Esophagus muscularis mucosa (tissue), 4 donors: ENCODE measurements at regions of chr2 and their contacts with region 1.

Region 1: GRCh38 chr2:135741395-135742324 is at the start of gene UBXN4:
- DNase-seq: peak; percentile 99
- H3K4me3 ChIP-seq: peak within 1 kb of the TSS; percentile 94 to 99 (median 96)
- H3K27ac ChIP-seq: peak within 1 kb of the TSS; percentile 98 to 100 (median 100)
- H3K4me1 ChIP-seq: peaks cover 27 to 42% (median 36%) of the 10 kb centered on the region in 4 donors
- H3K27me3 ChIP-seq: no peaks in the 10 kb centered on the region
- CTCF ChIP-seq: peak in 2 of 3 experiments; percentile 11 to 28
- EP300 ChIP-seq: no peak
- POLR2A ChIP-seq: peak; percentile 80
- total RNA-seq, gene UBXN4: 45.5 to 54.4 (median 51.1) TPM

Region 2: DNA sequence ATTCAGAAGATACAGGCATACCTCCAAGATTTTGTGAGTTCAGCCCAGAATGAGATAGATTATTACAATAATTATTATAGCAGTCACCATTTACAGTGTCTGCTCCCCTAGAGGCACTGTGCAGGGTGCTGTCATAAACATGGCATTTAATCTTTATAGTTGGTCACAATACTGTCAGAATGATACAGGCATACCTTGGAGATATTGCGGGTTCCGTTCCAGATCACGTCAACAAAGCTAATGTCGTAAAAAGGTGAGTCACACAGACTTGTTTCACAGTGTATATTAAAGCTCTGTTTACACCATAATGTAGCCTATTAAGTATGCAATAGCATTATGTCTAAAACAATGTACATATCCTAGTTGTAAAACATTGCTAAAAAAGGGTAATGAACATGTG is 256.2 kb before region 1 on chr2:
- intact Hi-C with region 1: no loop called
- DNase-seq: no peak
- H3K4me3 ChIP-seq: no peak overlapping the region
- H3K27ac ChIP-seq: no peak overlapping the region
- H3K4me1 ChIP-seq: no peaks in the 10 kb centered on the region
- H3K27me3 ChIP-seq: no peaks in the 10 kb centered on the region
- CTCF ChIP-seq: no peak
- EP300 ChIP-seq: no peak
- POLR2A ChIP-seq: no peak

Region 3: GRCh38 chr2:135531231-135532228 is 210.1 kb before region 1 on chr2 and contains the start of gene R3HDM1:
- intact Hi-C with region 1: loop called (anchors 5 kb)
- DNase-seq: peak; percentile 100
- H3K4me3 ChIP-seq: peak within 1 kb of the TSS; percentile 89 to 94 (median 90)
- H3K27ac ChIP-seq: peak within 1 kb of the TSS; percentile 89 to 93 (median 90)
- H3K4me1 ChIP-seq: peaks cover 6 to 30% (median 22%) of the 10 kb centered on the region in 4 donors
- H3K27me3 ChIP-seq: no peaks in the 10 kb centered on the region
- CTCF ChIP-seq: no peak
- EP300 ChIP-seq: no peak
- POLR2A ChIP-seq: no peak
- total RNA-seq, gene R3HDM1: 13.1 to 56.6 (median 19.6) TPM

Region 4: DNA sequence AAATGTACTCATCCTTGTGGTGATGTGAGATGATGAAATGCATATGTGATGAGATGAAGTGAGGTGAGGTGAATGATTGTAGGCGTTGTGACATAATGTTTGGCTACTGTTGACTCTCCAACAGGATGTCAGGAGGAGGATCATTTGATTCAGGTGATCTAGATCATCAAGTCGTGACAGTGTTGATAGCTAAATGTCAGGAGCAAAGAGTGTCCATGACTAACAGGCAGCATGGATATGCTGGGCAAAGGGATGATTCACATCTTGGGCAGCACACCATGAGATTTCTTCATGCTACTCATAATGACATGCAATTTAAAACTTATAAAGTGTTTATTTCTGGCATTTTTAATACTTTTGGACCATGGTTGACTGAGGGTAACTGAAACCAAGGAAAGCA is 40.2 kb before region 1 on chr2:
- intact Hi-C with region 1: no loop called
- DNase-seq: no peak
- H3K4me3 ChIP-seq: no peak overlapping the region
- H3K27ac ChIP-seq: no peak overlapping the region
- H3K4me1 ChIP-seq: no peaks in the 10 kb centered on the region
- H3K27me3 ChIP-seq: no peaks in the 10 kb centered on the region
- CTCF ChIP-seq: no peak
- EP300 ChIP-seq: no peak
- POLR2A ChIP-seq: no peak

Region 5: DNA sequence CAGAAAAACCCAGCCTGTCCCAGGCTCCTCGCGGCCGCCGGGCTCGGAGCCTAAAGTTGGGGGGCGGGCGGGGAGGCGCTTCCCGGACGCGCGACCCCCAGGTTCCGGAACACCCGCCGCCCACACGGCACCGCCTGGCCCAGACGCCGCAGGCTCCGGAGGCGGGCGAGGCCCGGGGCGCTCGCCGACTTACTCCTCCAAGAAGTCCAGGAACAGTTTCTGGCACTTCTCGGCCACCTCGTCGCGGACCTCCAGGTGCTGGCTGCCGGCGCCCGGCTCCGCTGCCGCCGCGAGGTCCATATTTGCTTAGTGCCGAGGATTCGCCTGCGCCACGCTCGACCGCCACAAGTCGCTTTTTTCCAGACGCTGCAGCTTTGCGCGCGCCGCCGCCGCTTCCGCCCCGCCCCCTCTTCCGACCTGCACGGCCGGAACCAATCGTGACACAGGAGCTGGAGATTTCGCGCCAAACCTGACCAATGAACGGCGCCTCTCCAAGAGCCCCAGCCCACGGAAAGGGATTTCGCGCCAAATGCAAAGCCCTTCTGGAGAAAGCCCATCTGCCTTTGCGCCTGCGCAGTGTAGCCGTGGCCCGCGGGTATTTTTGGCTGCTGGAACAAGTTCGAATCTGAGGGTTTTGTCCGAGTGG is 134.5 kb after region 1 on chr2 and contains the start of gene MCM6:
- intact Hi-C with region 1: loop called (anchors 10 kb)
- DNase-seq: peak; percentile 99
- H3K4me3 ChIP-seq: peak within 1 kb of the TSS; percentile 73 to 82 (median 76)
- H3K27ac ChIP-seq: peak within 1 kb of the TSS; percentile 83 to 92 (median 88)
- H3K4me1 ChIP-seq: peaks cover 13 to 21% (median 16%) of the 10 kb centered on the region in 4 donors
- H3K27me3 ChIP-seq: no peaks in the 10 kb centered on the region
- CTCF ChIP-seq: peak in 2 of 3 experiments; percentile 23 to 44
- EP300 ChIP-seq: no peak
- POLR2A ChIP-seq: no peak
- total RNA-seq, gene MCM6: 7.5 to 10.1 (median 9.3) TPM

Region 6: GRCh38 chr2:135985018-135985825 is 243.6 kb after region 1 on chr2 and contains the start of gene DARS1:
- intact Hi-C with region 1: loop called (anchors 10 kb)
- DNase-seq: peak; percentile 96
- H3K4me3 ChIP-seq: peak within 1 kb of the TSS; percentile 80 to 91 (median 90)
- H3K27ac ChIP-seq: peak within 1 kb of the TSS; percentile 94 to 98 (median 95)
- H3K4me1 ChIP-seq: peaks cover 13 to 53% (median 47%) of the 10 kb centered on the region in 4 donors
- H3K27me3 ChIP-seq: no peaks in the 10 kb centered on the region
- CTCF ChIP-seq: no peak
- EP300 ChIP-seq: no peak
- POLR2A ChIP-seq: no peak
- total RNA-seq, gene DARS1: 98.8 to 129 (median 121) TPM